ENCODE measurements at regions of chr1 and their contacts with region 1.

Region 1: GRCh38 chr1:91876040-91876470 is 9.9 kb downstream of the TGFBR3 start:
- DNase-seq: peak; percentile 64
- H3K4me3 Mint-ChIP-seq: no peak overlapping the region
- H3K27ac Mint-ChIP-seq: peak overlapping the region; percentile 18
- H3K4me1 Mint-ChIP-seq: peaks cover 75% of the 10 kb centered on the region
- H3K27me3 Mint-ChIP-seq: no peaks in the 10 kb centered on the region

Region 2: GRCh38 chr1:91673613-91674012 is 202.4 kb before region 1 on chr1:
- CTCF ChIA-PET with region 1: no interaction called
- POLR2A ChIA-PET with region 1: no interaction called
- intact Hi-C with region 1: loop called (anchors 2 kb)
- DNase-seq: no peak
- H3K4me3 Mint-ChIP-seq: no peak overlapping the region
- H3K27ac Mint-ChIP-seq: no peak overlapping the region
- H3K4me1 Mint-ChIP-seq: peaks cover 37% of the 10 kb centered on the region
- H3K27me3 Mint-ChIP-seq: no peaks in the 10 kb centered on the region

Region 3: GRCh38 chr1:91732291-91733107 is 143.6 kb before region 1 on chr1:
- CTCF ChIA-PET with region 1: no interaction called
- POLR2A ChIA-PET with region 1: no interaction called
- intact Hi-C with region 1: loop called (anchors 1 kb)
- DNase-seq: peak; percentile 65
- H3K4me3 Mint-ChIP-seq: peak overlapping the region; percentile 24
- H3K27ac Mint-ChIP-seq: peak overlapping the region; percentile 29
- H3K4me1 Mint-ChIP-seq: peaks cover 50% of the 10 kb centered on the region
- H3K27me3 Mint-ChIP-seq: no peaks in the 10 kb centered on the region

Region 4: DNA sequence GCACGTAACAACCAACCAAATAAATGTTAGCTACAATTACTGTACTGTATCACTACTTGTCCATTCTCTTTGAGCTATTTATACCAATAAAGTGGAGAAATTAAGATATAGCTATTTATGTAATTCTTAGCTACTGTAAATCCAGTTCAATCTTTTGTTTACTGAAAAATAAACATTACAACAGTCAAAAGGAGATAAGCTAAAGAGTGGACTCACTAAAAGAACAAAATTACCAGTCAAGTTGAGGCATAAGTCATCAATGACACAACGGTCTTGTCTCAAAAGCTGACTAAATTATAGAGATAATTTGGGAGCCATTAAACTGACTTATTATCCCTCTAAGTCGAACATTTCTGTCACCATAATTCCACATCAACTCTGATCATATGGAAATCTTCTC is 12.6 kb before region 1 on chr1:
- CTCF ChIA-PET with region 1: no interaction called
- POLR2A ChIA-PET with region 1: no interaction called
- intact Hi-C with region 1: loop called (anchors 1 kb)
- DNase-seq: no peak
- H3K4me3 Mint-ChIP-seq: no peak overlapping the region
- H3K27ac Mint-ChIP-seq: no peak overlapping the region
- H3K4me1 Mint-ChIP-seq: peaks cover 11% of the 10 kb centered on the region
- H3K27me3 Mint-ChIP-seq: no peaks in the 10 kb centered on the region

Region 5: DNA sequence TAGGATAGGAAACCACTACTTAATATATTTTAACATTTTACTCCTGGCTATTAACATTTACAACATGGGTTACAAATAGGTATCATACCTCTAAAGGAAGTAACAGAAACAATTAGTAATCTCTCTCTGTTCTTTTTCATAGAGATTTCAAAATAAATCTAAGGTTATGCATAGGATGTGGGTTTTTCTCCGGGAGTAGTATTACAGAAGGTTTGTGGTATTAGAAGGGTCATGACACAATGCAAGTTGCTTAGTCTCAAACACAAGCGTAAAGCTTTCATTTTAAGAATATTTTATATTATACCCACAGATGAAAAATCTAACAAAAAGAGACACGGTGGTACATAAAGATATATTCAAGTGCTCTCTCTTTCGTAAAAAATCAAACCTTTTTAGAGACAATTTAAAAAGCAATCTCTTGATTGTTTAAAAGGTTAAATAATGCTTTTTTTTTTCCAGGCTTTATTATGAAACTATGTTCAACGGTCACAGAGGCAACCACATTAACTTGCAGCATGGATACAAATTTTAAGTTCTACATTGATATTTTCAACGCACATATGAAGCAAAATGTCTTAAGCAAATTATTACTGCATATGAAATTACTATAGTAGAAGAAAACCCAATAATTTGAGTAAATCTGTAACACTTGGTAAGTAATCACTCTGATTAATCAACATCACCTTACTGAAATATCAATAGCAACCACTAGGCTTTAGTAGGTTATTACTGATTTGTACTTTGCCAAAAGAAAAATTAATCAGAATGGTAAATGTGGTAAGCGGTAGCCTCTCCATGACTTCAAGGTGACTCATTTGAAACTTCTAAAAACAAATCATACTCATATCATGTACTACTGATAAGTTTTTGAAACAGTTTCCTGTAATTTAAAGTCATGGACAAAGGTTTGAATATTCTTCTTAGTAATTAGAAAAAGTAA is 708.0 kb after region 1 on chr1:
- CTCF ChIA-PET with region 1: no interaction called
- POLR2A ChIA-PET with region 1: no interaction called
- intact Hi-C with region 1: loop called (anchors 5 kb)
- DNase-seq: no peak
- H3K4me3 Mint-ChIP-seq: peak overlapping the region; percentile 65
- H3K27ac Mint-ChIP-seq: peak overlapping the region; percentile 92
- H3K4me1 Mint-ChIP-seq: peaks cover 64% of the 10 kb centered on the region
- H3K27me3 Mint-ChIP-seq: no peaks in the 10 kb centered on the region

Measured in activated CD4-positive, alpha-beta memory T cell treated with anti-CD3 and anti-CD28 coated beads for 36 hours (primary cell).